Activated CD8-positive, alpha-beta T cell treated with anti-CD3 and anti-CD28 coated beads, Interleukin-2, amount 10 ng/mL, durations not matched to agents 7 days and 5 days (primary cell): ENCODE measurements at regions of chr20 and their contacts with region 1.

Region 1: GRCh38 chr20:5608442-5609161 is 141.6 kb upstream of the SHLD1 start:
- DNase-seq: no peak
- ATAC-seq: no peak
- H3K4me3 Mint-ChIP-seq: peak overlapping the region; percentile 97
- H3K27ac Mint-ChIP-seq: peak overlapping the region; percentile 78
- H3K4me1 Mint-ChIP-seq: peaks cover 60% of the 10 kb centered on the region
- H3K27me3 Mint-ChIP-seq: no peaks in the 10 kb centered on the region

Region 2: DNA sequence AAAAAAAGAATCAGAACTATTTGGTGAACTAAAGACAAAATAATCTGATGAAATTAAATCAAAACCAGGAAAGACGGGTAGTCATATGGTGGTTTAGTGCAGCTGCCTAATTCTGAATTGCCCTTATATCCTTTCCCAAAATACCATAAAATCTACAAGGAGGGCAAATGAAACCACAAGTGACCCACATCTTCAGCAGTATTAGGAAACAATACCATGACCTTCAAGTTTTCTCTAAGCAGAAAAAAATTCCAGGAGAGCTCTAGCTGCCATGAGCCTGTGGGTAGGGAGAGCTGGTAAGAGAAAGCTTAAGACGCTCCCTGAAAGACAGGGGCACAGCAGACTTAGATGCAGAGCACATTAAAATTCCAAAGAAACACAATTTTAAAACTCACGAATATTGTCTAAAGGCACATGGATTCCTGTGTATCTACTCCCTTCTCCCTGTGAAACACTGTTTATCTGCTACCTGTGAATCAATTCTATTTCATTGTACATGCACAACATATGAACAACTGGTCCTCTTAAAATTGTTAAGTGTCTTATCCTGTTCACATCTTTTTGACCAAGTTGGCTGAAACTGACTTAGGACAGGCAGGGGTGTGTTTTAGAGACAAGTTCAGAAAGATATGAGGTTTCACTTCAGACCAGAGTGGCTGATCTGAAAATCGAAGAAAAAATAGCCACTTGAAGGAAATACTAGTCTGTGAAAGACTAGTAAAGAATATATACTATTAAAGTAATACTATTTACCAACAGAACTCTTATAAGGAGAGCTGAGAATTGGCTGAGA is 12.0 kb before region 1 on chr20:
- CTCF ChIA-PET with region 1: interaction called, 17 read pairs
- POLR2A ChIA-PET with region 1: interaction called, 20 read pairs
- DNase-seq: no peak
- ATAC-seq: no peak
- H3K4me3 Mint-ChIP-seq: no peak overlapping the region
- H3K27ac Mint-ChIP-seq: no peak overlapping the region
- H3K4me1 Mint-ChIP-seq: peaks cover 57% of the 10 kb centered on the region
- H3K27me3 Mint-ChIP-seq: no peaks in the 10 kb centered on the region

Region 3: DNA sequence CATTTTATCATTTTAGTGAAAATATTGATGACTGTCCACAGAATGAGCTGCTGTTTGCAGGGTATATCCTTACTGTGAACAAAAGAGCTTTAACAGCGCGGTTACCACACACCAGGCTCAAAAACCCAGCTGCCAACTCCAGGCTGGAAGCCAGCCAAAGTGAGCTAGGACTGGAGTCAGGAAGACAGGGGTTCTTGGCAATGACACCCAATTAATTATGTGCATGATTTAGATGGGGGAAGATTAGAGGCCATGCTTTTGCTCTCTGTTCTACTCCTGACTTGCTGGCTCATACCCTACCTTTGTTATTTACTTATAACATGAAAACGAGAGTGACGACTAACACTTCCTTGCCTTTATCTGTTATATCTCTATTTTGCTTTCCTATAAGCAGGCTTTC is 12.7 kb after region 1 on chr20:
- CTCF ChIA-PET with region 1: no interaction called
- POLR2A ChIA-PET with region 1: no interaction called
- DNase-seq: no peak
- ATAC-seq: no peak
- H3K4me3 Mint-ChIP-seq: no peak overlapping the region
- H3K27ac Mint-ChIP-seq: no peak overlapping the region
- H3K4me1 Mint-ChIP-seq: no peaks in the 10 kb centered on the region
- H3K27me3 Mint-ChIP-seq: no peaks in the 10 kb centered on the region

Region 4: DNA sequence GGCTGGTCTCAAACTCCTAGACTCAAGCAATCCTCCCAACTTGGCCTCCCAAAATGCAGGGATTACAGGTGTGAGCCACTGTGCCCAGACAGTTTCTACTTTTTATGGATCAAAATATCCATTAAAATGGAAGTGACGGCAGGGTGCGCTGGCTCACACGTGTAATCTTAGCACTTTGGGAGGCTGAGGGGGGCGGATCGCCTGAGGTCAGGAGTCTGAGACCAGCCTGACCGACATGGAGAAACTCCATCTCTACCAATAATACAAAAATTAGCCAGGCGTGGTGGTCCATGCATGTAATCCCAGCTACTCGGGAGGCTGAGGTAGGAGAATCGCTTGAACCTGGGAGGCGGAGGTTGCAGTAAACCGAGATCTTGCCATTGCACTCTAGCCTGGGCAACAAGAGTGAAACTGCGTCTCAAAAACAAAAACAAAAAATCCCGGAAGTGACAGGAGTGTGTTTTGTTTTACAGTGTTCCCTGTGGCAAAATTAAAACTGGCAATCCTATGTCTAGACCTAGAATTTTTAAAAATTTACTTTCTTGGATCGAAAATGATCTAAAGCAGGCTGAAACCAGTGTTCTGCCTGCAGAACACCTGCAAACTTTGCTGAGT is 25.3 kb after region 1 on chr20:
- CTCF ChIA-PET with region 1: no interaction called
- POLR2A ChIA-PET with region 1: no interaction called
- DNase-seq: no peak
- ATAC-seq: no peak
- H3K4me3 Mint-ChIP-seq: no peak overlapping the region
- H3K27ac Mint-ChIP-seq: no peak overlapping the region
- H3K4me1 Mint-ChIP-seq: no peaks in the 10 kb centered on the region
- H3K27me3 Mint-ChIP-seq: no peaks in the 10 kb centered on the region

Region 5: DNA sequence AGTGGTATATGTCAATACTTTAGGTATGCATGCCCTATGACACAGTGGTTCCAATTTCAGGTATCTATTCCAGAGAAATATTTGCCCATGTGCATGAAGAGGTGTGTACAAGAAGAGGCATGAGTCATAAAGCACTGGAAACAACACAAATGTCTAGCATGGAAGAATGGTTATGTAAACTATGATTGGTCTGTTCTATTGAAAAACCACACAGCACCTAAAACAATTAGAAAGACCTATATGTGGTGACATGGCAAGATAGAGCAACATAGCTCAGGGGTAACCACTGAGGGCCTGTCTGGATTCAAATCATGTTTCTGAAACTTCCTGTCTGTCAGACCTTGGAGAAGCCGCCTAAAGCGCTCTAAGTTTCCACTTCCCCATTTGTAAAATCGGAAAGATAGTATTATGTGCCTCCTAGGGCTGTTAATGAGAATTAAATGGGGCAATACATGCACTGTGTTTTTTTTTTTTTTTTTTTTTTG is 65.6 kb after region 1 on chr20:
- CTCF ChIA-PET with region 1: no interaction called
- POLR2A ChIA-PET with region 1: no interaction called
- DNase-seq: no peak
- ATAC-seq: peak; percentile 60
- H3K4me3 Mint-ChIP-seq: no peak overlapping the region
- H3K27ac Mint-ChIP-seq: no peak overlapping the region
- H3K4me1 Mint-ChIP-seq: peaks cover 9% of the 10 kb centered on the region
- H3K27me3 Mint-ChIP-seq: no peaks in the 10 kb centered on the region